WTC11 (cell line): ENCODE measurements at regions of chr10 and their contacts with region 1.

Region 1: GRCh38 chr10:76303682-76304316 is 872.4 kb downstream of the LRMDA start:
- DNase-seq: peak; percentile 76
- ATAC-seq: peak; percentile 98
- H3K4me3 Mint-ChIP-seq: no peak overlapping the region
- H3K27ac Mint-ChIP-seq: no peak overlapping the region
- H3K4me1 Mint-ChIP-seq: peaks cover 46% of the 10 kb centered on the region
- H3K27me3 Mint-ChIP-seq: peaks cover 25% of the 10 kb centered on the region
- CTCF ChIP-seq: peak; percentile 34; the same call in 1 of the 2 replicates

Region 2: GRCh38 chr10:76086761-76087639 is 216.8 kb before region 1 on chr10:
- CTCF ChIA-PET with region 1: interaction called, 17 read pairs
- POLR2A ChIA-PET with region 1: no interaction called
- DNase-seq: peak; percentile 51
- ATAC-seq: peak; percentile 66
- H3K4me3 Mint-ChIP-seq: no peak overlapping the region
- H3K27ac Mint-ChIP-seq: no peak overlapping the region
- H3K4me1 Mint-ChIP-seq: peaks cover 58% of the 10 kb centered on the region
- H3K27me3 Mint-ChIP-seq: peaks cover 12% of the 10 kb centered on the region
- CTCF ChIP-seq: peak; percentile 73

Region 3: GRCh38 chr10:76106611-76107010 is 197.2 kb before region 1 on chr10:
- CTCF ChIA-PET with region 1: interaction called, 12 read pairs
- POLR2A ChIA-PET with region 1: no interaction called
- DNase-seq: no peak
- ATAC-seq: no peak
- H3K4me3 Mint-ChIP-seq: no peak overlapping the region
- H3K27ac Mint-ChIP-seq: no peak overlapping the region
- H3K4me1 Mint-ChIP-seq: peaks cover 41% of the 10 kb centered on the region
- H3K27me3 Mint-ChIP-seq: peaks cover 26% of the 10 kb centered on the region
- CTCF ChIP-seq: no peak

Region 4: DNA sequence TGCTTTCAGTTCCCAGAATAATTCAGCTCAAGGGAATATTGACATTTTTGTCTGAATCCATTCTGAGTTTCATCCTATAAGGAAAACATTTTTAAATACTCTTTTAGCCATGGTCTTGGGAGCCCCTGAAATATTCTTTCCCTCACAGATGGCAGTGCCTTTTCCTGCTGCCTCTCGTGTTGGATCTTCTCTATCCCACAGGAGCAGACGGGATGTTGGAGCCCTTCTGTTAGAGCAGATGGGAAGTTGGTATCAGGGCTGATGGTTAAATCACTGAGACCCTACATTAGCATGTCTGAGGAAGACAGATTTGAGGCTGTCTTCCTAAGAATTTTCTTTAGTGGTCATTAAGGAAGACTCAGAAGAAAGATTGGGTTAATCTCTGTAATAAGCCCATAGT is 134.6 kb before region 1 on chr10:
- CTCF ChIA-PET with region 1: no interaction called
- POLR2A ChIA-PET with region 1: no interaction called
- DNase-seq: no peak
- ATAC-seq: no peak
- H3K4me3 Mint-ChIP-seq: no peak overlapping the region
- H3K27ac Mint-ChIP-seq: no peak overlapping the region
- H3K4me1 Mint-ChIP-seq: peaks cover 2% of the 10 kb centered on the region; the same call in 1 of the 2 replicates
- H3K27me3 Mint-ChIP-seq: peaks cover 7% of the 10 kb centered on the region
- CTCF ChIP-seq: no peak

Region 5: GRCh38 chr10:76285012-76285411 is 18.8 kb before region 1 on chr10:
- CTCF ChIA-PET with region 1: no interaction called
- POLR2A ChIA-PET with region 1: no interaction called
- DNase-seq: no peak
- ATAC-seq: no peak
- H3K4me3 Mint-ChIP-seq: no peak overlapping the region
- H3K27ac Mint-ChIP-seq: no peak overlapping the region
- H3K4me1 Mint-ChIP-seq: peaks cover 18% of the 10 kb centered on the region
- H3K27me3 Mint-ChIP-seq: peaks cover 10% of the 10 kb centered on the region
- CTCF ChIP-seq: no peak